GM12878 (cell line): ENCODE measurements at regions of chr4 and their contacts with region 1.

Region 1: GRCh38 chr4:4694296-4694772 is 152.5 kb upstream of the STX18 start:
- DNase-seq: no peak
- ATAC-seq: no peak
- H3K4me3 ChIP-seq: no peak overlapping the region
- H3K27ac ChIP-seq: no peak overlapping the region
- H3K4me1 ChIP-seq: peaks cover 13% of the 10 kb centered on the region
- H3K27me3 ChIP-seq: no peaks in the 10 kb centered on the region
- CTCF ChIP-seq: peak in 2 of 3 experiments; percentile 14 to 29; a peak in 1 of 6 replicates
- EP300 ChIP-seq: no peak
- POLR2A ChIP-seq: no peak
- RAD21 ChIP-seq: no peak

Region 2: GRCh38 chr4:4569028-4569427 is 125.3 kb before region 1 on chr4:
- CTCF ChIA-PET with region 1: no interaction called
- POLR2A ChIA-PET with region 1: no interaction called
- RAD21 ChIA-PET with region 1: no interaction called
- SMC1A ChIA-PET with region 1: no interaction called
- in situ Hi-C with region 1: no loop called
- intact Hi-C with region 1: no loop called
- DNase-seq: no peak
- ATAC-seq: no peak
- H3K4me3 ChIP-seq: no peak overlapping the region
- H3K27ac ChIP-seq: no peak overlapping the region
- H3K4me1 ChIP-seq: no peaks in the 10 kb centered on the region
- H3K27me3 ChIP-seq: no peaks in the 10 kb centered on the region
- CTCF ChIP-seq: no peak
- EP300 ChIP-seq: no peak
- POLR2A ChIP-seq: no peak
- RAD21 ChIP-seq: no peak

Region 3: GRCh38 chr4:4746444-4746843 is 52.1 kb after region 1 on chr4:
- CTCF ChIA-PET with region 1: no interaction called
- POLR2A ChIA-PET with region 1: no interaction called
- RAD21 ChIA-PET with region 1: no interaction called
- SMC1A ChIA-PET with region 1: no interaction called
- in situ Hi-C with region 1: no loop called
- intact Hi-C with region 1: no loop called
- DNase-seq: no peak
- ATAC-seq: no peak
- H3K4me3 ChIP-seq: no peak overlapping the region
- H3K27ac ChIP-seq: no peak overlapping the region
- H3K4me1 ChIP-seq: no peaks in the 10 kb centered on the region
- H3K27me3 ChIP-seq: no peaks in the 10 kb centered on the region
- CTCF ChIP-seq: no peak
- EP300 ChIP-seq: no peak
- POLR2A ChIP-seq: no peak
- RAD21 ChIP-seq: no peak

Region 4: DNA sequence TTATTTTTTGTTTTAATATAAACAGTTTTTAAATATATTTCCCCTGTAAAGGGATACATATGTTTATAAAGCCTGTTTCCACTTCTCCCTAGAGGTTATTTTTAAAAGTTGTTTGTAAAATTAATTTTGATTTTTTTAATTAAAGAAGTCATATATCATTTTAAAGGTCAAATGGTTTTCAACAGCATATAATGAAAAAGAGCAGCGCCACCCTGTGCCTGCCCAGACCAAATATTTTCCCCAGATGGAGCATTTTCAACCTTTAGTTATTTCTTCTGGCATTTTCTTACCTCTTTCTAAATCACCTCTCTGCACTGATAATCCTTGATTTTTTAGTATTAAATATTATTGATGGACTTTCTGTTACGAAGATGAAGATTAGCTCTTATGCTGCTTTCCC is 186.2 kb after region 1 on chr4:
- CTCF ChIA-PET with region 1: no interaction called
- POLR2A ChIA-PET with region 1: no interaction called
- RAD21 ChIA-PET with region 1: interaction called, 3 read pairs
- SMC1A ChIA-PET with region 1: no interaction called
- in situ Hi-C with region 1: no loop called
- intact Hi-C with region 1: loop called (anchors 5 kb)
- DNase-seq: no peak
- ATAC-seq: no peak
- H3K4me3 ChIP-seq: no peak overlapping the region
- H3K27ac ChIP-seq: no peak overlapping the region
- H3K4me1 ChIP-seq: no peaks in the 10 kb centered on the region
- H3K27me3 ChIP-seq: no peaks in the 10 kb centered on the region
- CTCF ChIP-seq: peak; percentile 17 to 49 (median 29); a peak in 3 of 6 replicates
- EP300 ChIP-seq: no peak
- POLR2A ChIP-seq: no peak
- RAD21 ChIP-seq: peak; percentile 58

Region 5: GRCh38 chr4:4922441-4922840 is 228.1 kb after region 1 on chr4:
- CTCF ChIA-PET with region 1: no interaction called
- POLR2A ChIA-PET with region 1: no interaction called
- RAD21 ChIA-PET with region 1: no interaction called
- SMC1A ChIA-PET with region 1: no interaction called
- in situ Hi-C with region 1: no loop called
- intact Hi-C with region 1: no loop called
- DNase-seq: no peak
- ATAC-seq: no peak
- H3K4me3 ChIP-seq: no peak overlapping the region
- H3K27ac ChIP-seq: no peak overlapping the region
- H3K4me1 ChIP-seq: no peaks in the 10 kb centered on the region
- H3K27me3 ChIP-seq: no peaks in the 10 kb centered on the region
- CTCF ChIP-seq: no peak
- EP300 ChIP-seq: no peak
- POLR2A ChIP-seq: no peak
- RAD21 ChIP-seq: no peak

Region 6: GRCh38 chr4:5079581-5079980 is 385.2 kb after region 1 on chr4:
- CTCF ChIA-PET with region 1: no interaction called
- POLR2A ChIA-PET with region 1: no interaction called
- RAD21 ChIA-PET with region 1: no interaction called
- SMC1A ChIA-PET with region 1: no interaction called
- in situ Hi-C with region 1: no loop called
- intact Hi-C with region 1: no loop called
- DNase-seq: no peak
- ATAC-seq: no peak
- H3K4me3 ChIP-seq: no peak overlapping the region
- H3K27ac ChIP-seq: no peak overlapping the region
- H3K4me1 ChIP-seq: no peaks in the 10 kb centered on the region
- H3K27me3 ChIP-seq: no peaks in the 10 kb centered on the region
- CTCF ChIP-seq: no peak
- EP300 ChIP-seq: no peak
- POLR2A ChIP-seq: no peak
- RAD21 ChIP-seq: no peak